ENCODE measurements at regions of chr14 and their contacts with region 1.

Region 1: GRCh38 chr14:74612350-74613021 is 449 bp upstream of the LTBP2 start:
- DNase-seq: peak; percentile 91
- ATAC-seq: peak; percentile 91
- H3K4me3 ChIP-seq: peak overlapping the region; percentile 38 to 82 (median 61)
- H3K4me3 Mint-ChIP-seq: peak overlapping the region; percentile 76
- H3K27ac ChIP-seq: no peak overlapping the region
- H3K27ac Mint-ChIP-seq: peak overlapping the region; percentile 32
- H3K4me1 ChIP-seq: peaks cover 36 to 43% of the 10 kb centered on the region in 2 donors
- H3K4me1 Mint-ChIP-seq: peaks cover 43% of the 10 kb centered on the region
- H3K27me3 ChIP-seq: peaks cover 0 to 18% (median 5%) of the 10 kb centered on the region in 4 experiments
- H3K27me3 Mint-ChIP-seq: peaks cover 16% of the 10 kb centered on the region
- CTCF ChIP-seq: peak; percentile 67

Region 2: GRCh38 chr14:74302634-74303577 is 309.6 kb before region 1 on chr14 and contains the start of gene ABCD4:
- CTCF ChIA-PET with region 1: interaction called, 3 read pairs
- POLR2A ChIA-PET with region 1: no interaction called
- intact Hi-C with region 1: loop called (anchors 2 kb)
- DNase-seq: peak; percentile 90
- ATAC-seq: peak; percentile 98
- H3K4me3 ChIP-seq: peak within 1 kb of the TSS; percentile 69 to 96 (median 86)
- H3K4me3 Mint-ChIP-seq: peak within 1 kb of the TSS; percentile 95
- H3K27ac ChIP-seq: peak within 1 kb of the TSS; percentile 69 to 81
- H3K27ac Mint-ChIP-seq: peak within 1 kb of the TSS; percentile 88
- H3K4me1 ChIP-seq: peaks cover 11 to 14% of the 10 kb centered on the region in 2 donors
- H3K4me1 Mint-ChIP-seq: peaks cover 23% of the 10 kb centered on the region
- H3K27me3 ChIP-seq: no peaks in the 10 kb centered on the region
- H3K27me3 Mint-ChIP-seq: no peaks in the 10 kb centered on the region
- CTCF ChIP-seq: peak; percentile 59
- total RNA-seq, gene ABCD4: 119 and 125 TPM in 2 replicates

Region 3: GRCh38 chr14:74493343-74494261 is 118.9 kb before region 1 on chr14 and contains the start of gene ISCA2:
- CTCF ChIA-PET with region 1: no interaction called
- POLR2A ChIA-PET with region 1: no interaction called
- intact Hi-C with region 1: loop called (anchors 2 kb)
- DNase-seq: peak; percentile 99
- ATAC-seq: peak; percentile 89
- H3K4me3 ChIP-seq: peak within 1 kb of the TSS; percentile 87 to 98 (median 94)
- H3K4me3 Mint-ChIP-seq: no peak within 1 kb of the TSS
- H3K27ac ChIP-seq: peak within 1 kb of the TSS; percentile 74 to 97
- H3K27ac Mint-ChIP-seq: peak within 1 kb of the TSS; percentile 83
- H3K4me1 ChIP-seq: peaks cover 18 to 27% of the 10 kb centered on the region in 2 donors
- H3K4me1 Mint-ChIP-seq: peaks cover 33% of the 10 kb centered on the region
- H3K27me3 ChIP-seq: no peaks in the 10 kb centered on the region
- H3K27me3 Mint-ChIP-seq: no peaks in the 10 kb centered on the region
- CTCF ChIP-seq: no peak
- total RNA-seq, gene ISCA2: 28.3 and 30.0 TPM in 2 replicates

Region 4: DNA sequence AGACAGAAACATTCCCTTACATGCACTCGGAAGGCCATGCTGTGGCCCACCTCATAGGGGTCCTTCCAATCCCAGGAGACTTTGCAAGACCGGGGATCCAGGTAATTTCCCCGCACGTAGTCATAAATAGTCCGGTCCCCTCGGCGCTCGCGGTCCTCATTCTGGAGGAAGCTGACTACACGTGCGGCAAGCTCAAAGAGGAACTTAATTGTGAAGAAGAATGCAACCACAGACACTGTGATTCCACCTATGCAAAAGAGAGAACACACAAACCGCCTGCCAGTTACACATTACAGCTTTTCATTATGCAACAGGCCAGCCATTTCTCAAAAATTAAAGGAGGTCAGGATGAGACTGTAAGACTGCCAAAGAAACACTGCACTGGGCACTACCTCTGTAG is 71.9 kb after region 1 on chr14:
- CTCF ChIA-PET with region 1: interaction called, 8 read pairs
- POLR2A ChIA-PET with region 1: no interaction called
- intact Hi-C with region 1: loop called (anchors 2 kb)
- DNase-seq: peak; percentile 72
- ATAC-seq: peak; percentile 82
- H3K4me3 ChIP-seq: no peak overlapping the region
- H3K4me3 Mint-ChIP-seq: peak overlapping the region; percentile 59
- H3K27ac ChIP-seq: no peak overlapping the region
- H3K27ac Mint-ChIP-seq: peak overlapping the region; percentile 64
- H3K4me1 ChIP-seq: peaks cover 29% of the 10 kb centered on the region in 2 donors
- H3K4me1 Mint-ChIP-seq: peaks cover 27% of the 10 kb centered on the region
- H3K27me3 ChIP-seq: no peaks in the 10 kb centered on the region
- H3K27me3 Mint-ChIP-seq: no peaks in the 10 kb centered on the region
- CTCF ChIP-seq: no peak

Region 5: DNA sequence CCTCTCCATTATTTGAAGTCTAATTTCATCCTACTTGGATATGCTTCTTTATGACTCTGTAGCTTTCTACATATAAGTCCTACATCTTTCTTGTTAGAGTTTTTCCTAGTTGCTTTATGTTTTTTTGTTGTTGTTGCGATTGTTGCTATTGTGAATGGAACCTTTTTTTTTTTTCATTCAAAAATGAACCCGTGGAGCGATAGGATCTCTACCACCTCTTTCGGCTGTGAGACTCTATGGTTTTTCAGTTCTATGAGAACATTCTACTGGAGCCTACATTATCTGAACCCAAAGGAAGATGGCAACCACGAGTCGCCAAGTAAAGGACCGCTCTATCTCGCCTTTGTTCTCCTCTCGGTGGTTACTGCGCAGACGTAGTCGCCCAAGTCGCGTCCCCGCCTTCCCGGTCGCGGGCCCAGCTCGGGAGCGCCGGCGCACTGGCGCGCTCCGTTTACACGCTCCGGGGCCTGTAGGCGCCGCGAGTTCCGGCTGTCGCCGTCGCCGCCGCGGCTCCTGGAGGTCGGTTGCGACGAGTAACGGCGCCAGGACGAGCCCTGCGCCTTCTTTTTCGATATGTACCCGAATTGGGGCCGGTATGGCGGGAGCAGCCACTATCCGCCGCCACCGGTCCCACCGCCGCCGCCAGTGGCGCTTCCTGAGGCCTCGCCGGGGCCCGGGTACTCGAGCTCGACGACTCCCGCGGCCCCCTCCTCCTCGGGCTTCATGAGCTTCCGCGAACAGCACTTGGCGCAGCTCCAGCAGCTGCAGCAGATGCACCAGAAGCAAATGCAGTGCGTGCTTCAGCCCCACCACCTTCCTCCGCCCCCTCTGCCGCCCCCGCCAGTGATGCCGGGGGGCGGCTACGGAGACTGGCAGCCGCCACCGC is 150.7 kb after region 1 on chr14 and contains the start of gene YLPM1:
- CTCF ChIA-PET with region 1: interaction called, 12 read pairs
- POLR2A ChIA-PET with region 1: no interaction called
- intact Hi-C with region 1: loop called (anchors 1 kb)
- DNase-seq: peak; percentile 98
- ATAC-seq: peak; percentile 93
- H3K4me3 ChIP-seq: peak within 1 kb of the TSS; percentile 61 to 98 (median 94)
- H3K4me3 Mint-ChIP-seq: peak within 1 kb of the TSS; percentile 93
- H3K27ac ChIP-seq: peak within 1 kb of the TSS; percentile 88 to 95
- H3K27ac Mint-ChIP-seq: peak within 1 kb of the TSS; percentile 98
- H3K4me1 ChIP-seq: peaks cover 38 to 46% of the 10 kb centered on the region in 2 donors
- H3K4me1 Mint-ChIP-seq: peaks cover 52% of the 10 kb centered on the region
- H3K27me3 ChIP-seq: no peaks in the 10 kb centered on the region
- H3K27me3 Mint-ChIP-seq: no peaks in the 10 kb centered on the region
- CTCF ChIP-seq: peak; percentile 73
- total RNA-seq, gene YLPM1: 116 and 124 TPM in 2 replicates

Region 6: DNA sequence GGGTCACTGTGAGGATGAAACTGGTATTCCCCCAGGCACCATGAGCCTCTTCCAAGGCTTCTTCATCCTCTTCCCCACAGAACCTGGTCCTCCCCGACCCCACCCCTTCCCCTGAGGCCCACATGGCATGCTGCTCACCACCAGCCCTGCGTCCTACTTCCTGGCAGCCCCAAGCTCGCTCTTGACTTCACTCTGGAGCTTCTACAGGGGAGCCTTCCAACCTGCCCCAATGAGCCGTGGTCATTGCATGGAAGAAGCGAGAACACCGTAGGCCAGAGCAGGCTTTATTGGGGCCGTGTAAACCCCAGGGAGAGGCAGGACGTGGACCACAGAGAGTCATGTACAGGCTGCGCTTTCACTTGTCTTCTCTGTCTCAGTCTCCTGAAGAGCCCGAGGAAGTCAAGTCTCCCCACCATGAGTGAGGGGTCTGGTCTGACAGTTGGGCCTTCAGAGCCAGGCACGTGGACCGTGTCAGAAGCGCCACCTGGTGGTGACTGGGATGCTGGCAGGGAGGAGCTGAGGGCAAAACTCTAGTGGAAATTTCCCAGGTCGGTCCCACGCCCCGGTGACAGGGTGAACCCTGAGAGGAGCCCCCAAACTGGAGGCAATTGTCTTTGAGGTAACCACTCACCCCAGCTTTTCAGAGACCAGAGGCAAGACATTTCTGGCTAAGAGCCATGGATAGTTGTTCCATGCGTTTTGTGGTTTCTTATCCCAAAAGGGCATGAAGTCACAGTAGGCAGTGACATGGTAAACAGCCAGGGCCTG is 293.1 kb after region 1 on chr14:
- CTCF ChIA-PET with region 1: interaction called, 14 read pairs
- POLR2A ChIA-PET with region 1: no interaction called
- intact Hi-C with region 1: no loop called
- DNase-seq: peak; percentile 79
- ATAC-seq: peak; percentile 72
- H3K4me3 ChIP-seq: no peak overlapping the region
- H3K4me3 Mint-ChIP-seq: no peak overlapping the region
- H3K27ac ChIP-seq: peak overlapping the region in 1 of 2 donors; percentile 33
- H3K27ac Mint-ChIP-seq: peak overlapping the region; percentile 73
- H3K4me1 ChIP-seq: peaks cover 17 to 52% of the 10 kb centered on the region in 2 donors
- H3K4me1 Mint-ChIP-seq: peaks cover 41% of the 10 kb centered on the region
- H3K27me3 ChIP-seq: no peaks in the 10 kb centered on the region
- H3K27me3 Mint-ChIP-seq: no peaks in the 10 kb centered on the region
- CTCF ChIP-seq: peak; percentile 93

Region 7: DNA sequence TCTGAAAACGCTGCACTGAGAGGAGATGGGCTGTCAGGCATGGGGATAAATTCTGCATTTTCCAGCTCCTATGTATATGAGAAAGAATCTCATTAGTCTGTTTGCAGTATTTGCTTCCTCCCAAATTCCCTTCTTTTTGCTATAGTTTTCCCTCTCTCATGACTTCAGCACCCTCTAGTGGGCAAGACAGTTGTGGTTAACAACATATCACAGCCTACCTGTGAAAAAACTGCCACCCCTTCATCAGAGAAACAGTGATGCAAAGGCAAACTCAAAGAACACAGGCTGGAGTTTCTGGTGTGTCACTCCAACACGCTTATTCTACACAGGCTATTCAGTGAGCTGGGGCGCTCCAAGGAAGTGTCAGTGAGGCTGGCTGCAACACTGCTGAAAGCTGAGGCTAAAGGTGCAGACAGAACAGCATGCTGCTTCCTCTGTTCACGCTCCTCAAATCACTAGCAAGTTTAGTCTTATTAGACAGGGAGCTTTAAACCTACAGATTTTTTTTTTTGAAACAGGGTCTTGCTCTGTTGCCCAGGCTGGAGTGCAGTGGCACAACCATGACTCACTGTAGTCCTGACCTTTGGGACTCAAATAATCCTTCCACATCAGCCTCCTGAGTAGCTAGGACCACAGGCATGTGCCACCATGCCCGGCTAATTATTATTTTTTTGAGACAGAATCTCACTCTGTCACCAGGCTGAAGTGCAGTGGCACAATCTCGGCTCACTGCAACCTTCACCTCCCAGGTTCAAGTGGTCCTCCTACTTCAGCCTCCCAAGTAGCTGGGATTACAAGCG is 476.3 kb after region 1 on chr14:
- CTCF ChIA-PET with region 1: interaction called, 11 read pairs
- POLR2A ChIA-PET with region 1: no interaction called
- intact Hi-C with region 1: loop called (anchors 1 kb)
- DNase-seq: peak; percentile 65
- ATAC-seq: peak; percentile 51
- H3K4me3 ChIP-seq: no peak overlapping the region
- H3K4me3 Mint-ChIP-seq: no peak overlapping the region
- H3K27ac ChIP-seq: no peak overlapping the region
- H3K27ac Mint-ChIP-seq: no peak overlapping the region
- H3K4me1 ChIP-seq: no peaks in the 10 kb centered on the region
- H3K4me1 Mint-ChIP-seq: no peaks in the 10 kb centered on the region
- H3K27me3 ChIP-seq: no peaks in the 10 kb centered on the region
- H3K27me3 Mint-ChIP-seq: no peaks in the 10 kb centered on the region
- CTCF ChIP-seq: peak; percentile 81